Sciatic nerve (tissue), 2 donors: ENCODE measurements at regions of chr12 and their contacts with region 1.

Region 1: DNA sequence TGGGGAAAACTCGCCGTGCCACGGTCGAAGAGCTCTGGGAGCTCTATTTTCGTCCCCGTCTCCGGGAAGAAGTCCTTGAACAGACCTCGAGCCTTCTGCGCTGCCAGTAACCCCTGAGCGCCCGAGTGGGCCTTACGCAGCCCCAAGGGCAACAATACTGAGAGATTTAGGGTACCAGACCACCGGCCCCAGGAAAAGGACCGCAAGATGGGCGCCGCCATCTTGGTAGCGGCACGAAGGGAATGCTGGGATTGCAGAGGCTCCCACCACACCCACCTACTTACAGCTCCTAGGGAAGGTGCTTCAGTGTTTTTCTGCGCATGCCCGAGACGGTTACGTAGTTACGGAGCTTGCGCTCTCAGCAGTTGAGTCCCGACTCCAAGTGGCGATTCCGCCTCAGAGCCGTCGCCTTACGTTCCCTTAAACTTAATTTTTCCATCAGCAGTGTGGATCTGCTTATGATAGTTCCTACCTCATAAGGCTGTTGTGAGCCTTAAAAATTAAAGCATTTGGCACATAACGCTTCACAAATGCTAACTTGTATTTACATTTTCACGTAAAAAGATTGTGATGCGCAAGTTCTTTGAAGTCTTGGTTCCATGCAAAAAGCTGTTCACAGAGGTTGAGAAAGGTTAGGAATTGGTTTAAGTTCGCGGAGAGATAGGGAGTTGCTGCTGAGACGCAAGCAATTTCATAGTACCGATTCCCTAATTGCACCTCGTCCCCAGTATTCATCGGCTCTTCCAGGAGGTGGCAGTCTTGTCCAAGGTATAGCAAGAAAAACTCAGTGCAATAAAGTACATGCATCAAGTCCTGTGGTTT is at the start of gene YARS2:
- DNase-seq: peak; percentile 96
- ATAC-seq: peak; percentile 99
- total RNA-seq, gene YARS2: 12.2 TPM

Region 2: DNA sequence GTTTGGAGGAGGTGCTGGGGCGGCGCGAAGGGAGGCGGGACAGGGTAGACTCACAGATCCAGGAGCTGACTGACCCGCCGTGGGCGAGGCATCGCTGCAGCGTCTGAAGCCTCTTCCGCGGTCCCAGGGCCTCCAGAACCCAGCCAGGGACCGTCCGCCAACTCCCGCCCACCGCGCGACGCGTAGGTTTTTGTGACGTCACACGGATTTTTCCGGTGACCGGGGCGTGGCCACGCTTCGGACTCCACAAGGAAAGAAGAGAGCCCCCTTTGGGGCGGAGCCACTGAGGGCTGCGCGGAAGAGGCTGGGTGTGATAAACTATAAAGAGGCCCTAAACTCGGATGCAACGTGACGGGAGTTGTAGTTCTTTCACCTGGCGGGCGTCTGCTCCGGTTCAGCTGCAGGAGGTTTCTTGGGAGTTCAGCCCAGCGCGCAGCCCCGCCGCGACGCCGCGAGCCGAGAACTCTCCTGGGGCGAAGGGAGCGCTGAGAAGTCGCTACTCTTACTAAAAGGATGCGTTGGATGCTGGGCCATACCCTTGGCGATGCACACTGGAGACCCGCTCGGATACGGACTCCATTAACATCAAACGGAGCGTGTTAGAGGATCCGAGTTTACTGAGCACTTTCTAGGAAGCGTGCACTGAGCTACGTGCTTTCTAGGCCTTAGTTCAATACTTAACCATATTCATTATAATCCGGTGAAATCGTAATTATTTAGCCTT is 1026.8 kb before region 1 on chr12 and contains the start of gene AMN1:
- intact Hi-C with region 1: loop called (anchors 10 kb)
- DNase-seq: peak; percentile 99
- ATAC-seq: peak; percentile 99
- total RNA-seq, gene AMN1: 9.3 TPM

Region 3: GRCh38 chr12:31874961-31875608 is 880.8 kb before region 1 on chr12:
- intact Hi-C with region 1: no loop called
- DNase-seq: no peak
- ATAC-seq: peak; percentile 66

Region 4: DNA sequence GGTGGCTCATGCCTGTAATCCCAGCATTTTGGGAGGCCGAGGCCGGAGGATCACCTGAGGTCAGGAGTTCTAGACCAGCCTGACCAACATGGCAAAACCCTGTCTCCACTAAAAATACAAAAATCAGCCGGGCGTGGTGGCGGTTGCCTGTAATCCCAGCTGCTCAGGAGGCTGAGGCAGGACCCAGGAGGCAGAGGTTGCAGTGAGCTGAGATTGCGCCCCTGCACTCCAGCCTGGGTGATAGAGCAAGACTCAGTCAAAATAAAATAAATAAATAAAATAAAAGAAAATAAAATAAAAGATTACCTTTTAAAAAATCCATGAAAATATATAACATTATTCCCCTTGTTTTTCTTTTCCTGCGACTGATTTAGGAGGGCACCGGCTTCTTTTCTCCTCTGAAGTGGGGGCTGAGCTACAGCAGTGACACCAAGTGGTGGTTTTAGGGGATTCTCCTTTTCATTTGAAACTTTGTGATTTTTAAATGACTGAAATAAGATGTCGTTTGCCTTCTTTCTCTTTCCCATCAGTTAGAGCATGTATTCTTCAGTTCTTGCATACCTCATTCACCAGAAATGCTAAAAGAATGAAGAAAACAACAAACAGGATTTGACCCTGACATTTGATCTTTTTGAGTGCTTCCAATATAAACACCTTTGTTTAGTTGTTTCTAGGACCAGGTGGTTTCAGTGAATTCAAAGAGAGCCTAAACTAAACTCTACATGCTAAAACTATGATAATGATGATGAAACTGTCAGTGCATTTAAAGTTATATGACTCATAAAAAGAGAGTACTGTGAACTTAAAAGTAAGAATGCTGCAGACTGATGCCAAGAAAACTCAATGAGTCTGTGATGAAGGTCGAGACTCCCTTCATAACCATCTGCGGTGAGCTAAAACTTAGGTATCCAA is 163.3 kb after region 1 on chr12:
- intact Hi-C with region 1: loop called (anchors 5 kb)
- DNase-seq: no peak
- ATAC-seq: peak; percentile 53

Region 5: DNA sequence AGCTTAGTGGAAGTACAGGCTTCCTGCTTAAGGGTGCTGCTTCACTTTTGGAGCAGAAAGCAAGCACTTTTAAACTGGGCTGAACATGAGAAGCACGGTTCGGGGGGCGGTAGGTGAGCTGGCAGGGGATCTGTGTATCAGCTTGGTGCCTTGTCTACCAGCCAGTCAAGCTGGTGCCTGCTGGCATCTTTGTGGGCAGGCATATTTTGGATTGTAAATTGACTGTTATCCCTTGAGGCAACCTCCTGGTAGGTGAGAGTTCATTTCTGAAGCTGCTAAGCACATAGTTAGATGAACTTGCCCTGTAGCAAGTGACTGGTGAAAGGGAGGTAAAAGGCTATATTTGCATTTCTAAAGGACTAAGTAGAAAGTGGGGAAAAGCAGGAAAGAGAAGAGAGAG is 804.8 kb after region 1 on chr12:
- intact Hi-C with region 1: no loop called
- DNase-seq: no peak
- ATAC-seq: no peak